AG04450 (cell line): ENCODE measurements at regions of chrX and their contacts with region 1.

Region 1: GRCh38 chrX:155027509-155028066 is 944 bp downstream of the FUNDC2 start:
- DNase-seq: no peak
- H3K4me3 ChIP-seq: peak overlapping the region; percentile 62
- H3K27ac ChIP-seq: peak overlapping the region; percentile 95
- H3K27me3 ChIP-seq: peaks cover 2% of the 10 kb centered on the region
- CTCF ChIP-seq: no peak

Region 2: DNA sequence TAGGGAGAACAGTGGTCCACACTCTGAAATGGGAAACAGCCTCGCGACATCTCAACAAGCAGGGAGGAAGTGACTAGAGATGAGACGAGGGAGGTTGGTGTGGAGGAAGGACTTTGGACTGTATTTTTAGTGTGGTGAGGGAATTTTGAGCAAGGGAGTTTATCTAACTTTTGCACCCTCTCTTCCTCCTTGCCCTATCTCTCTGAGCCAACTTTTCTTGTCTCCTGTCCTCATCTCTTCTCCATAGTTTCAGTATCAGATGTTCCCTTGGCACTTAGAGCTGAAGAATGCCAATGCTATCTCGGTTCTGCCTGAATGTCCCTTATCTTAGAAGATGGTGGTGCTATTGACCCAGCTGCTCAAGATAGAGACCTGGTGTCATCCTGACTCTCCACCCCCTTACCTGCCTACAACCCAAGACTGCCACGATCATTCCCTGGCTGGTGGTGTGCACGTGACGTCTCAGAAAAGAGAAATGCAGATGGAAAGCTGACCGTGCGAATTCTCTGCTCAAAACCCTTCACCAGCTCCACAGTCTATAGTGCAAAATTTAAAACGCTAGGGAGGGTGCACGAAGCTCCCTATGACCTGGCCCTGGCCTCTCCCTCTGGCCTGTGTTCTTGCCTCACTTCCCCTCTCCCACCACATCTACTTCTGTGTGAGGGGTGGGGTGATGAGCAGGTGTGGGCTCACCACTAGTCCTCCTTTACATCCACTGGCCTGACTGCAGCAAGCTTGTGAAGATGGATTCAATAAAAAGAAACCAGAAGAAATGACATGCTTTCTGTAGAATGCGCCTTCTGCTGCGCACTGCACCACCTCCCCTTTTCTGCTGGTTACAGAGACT is 243.2 kb before region 1 on chrX:
- CTCF ChIA-PET with region 1: no interaction called
- POLR2A ChIA-PET with region 1: no interaction called
- DNase-seq: no peak
- H3K4me3 ChIP-seq: no peak overlapping the region
- H3K27ac ChIP-seq: no peak overlapping the region
- H3K27me3 ChIP-seq: no peaks in the 10 kb centered on the region
- CTCF ChIP-seq: no peak

Region 3: DNA sequence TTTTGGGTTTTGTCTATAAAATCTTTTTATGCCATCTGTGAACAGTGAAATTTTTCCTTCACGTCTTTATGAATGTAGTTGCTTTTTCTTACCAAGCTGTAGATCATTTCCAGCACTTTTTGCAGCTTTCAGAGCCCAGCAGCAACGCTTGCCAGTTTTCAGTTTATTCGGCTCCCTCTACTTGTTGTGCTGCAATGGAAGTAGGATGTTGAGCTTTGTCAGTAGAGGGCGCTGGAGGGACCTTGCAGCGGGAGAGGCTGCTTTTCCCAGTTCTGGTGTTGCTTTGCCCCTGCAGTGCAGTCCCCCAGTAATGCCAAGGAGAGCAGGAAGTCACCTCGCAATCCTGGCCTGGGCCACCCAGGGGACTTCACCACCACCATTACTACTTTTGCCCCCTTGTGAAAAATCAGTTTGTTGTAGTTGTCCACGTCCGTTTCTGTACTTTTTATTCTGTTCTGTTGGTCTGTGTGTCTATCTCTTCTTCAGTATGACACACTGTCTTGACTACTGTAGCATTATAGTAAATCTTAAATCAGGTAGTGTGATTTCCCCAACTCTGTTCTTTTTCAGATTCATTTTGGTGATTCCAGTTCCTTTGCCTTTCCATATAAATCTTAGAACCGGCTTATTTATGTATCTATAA is 21.5 kb after region 1 on chrX:
- CTCF ChIA-PET with region 1: interaction called, 10 read pairs
- POLR2A ChIA-PET with region 1: no interaction called
- DNase-seq: no peak
- H3K4me3 ChIP-seq: no peak overlapping the region
- H3K27ac ChIP-seq: no peak overlapping the region
- H3K27me3 ChIP-seq: no peaks in the 10 kb centered on the region
- CTCF ChIP-seq: peak; percentile 68